ENCODE measurements at regions of chr6 and their contacts with region 1.

Region 1: GRCh38 chr6:44655412-44656342 is 268.2 kb downstream of the CDC5L start:
- DNase-seq: peak; percentile 66 to 87
- H3K4me3 ChIP-seq: no peak overlapping the region
- H3K27ac ChIP-seq: no peak overlapping the region
- H3K4me1 ChIP-seq: peaks cover 0 to 5% of the 10 kb centered on the region in 2 donors
- H3K27me3 ChIP-seq: no peaks in the 10 kb centered on the region
- CTCF ChIP-seq: peak; percentile 65 to 87 (median 87)

Region 2: GRCh38 chr6:44512868-44513741 is 142.6 kb before region 1 on chr6:
- intact Hi-C with region 1: no loop called
- DNase-seq: no peak
- H3K4me3 ChIP-seq: no peak overlapping the region
- H3K27ac ChIP-seq: no peak overlapping the region
- H3K4me1 ChIP-seq: no peaks in the 10 kb centered on the region
- H3K27me3 ChIP-seq: no peaks in the 10 kb centered on the region
- CTCF ChIP-seq: no peak

Region 3: GRCh38 chr6:44898296-44898930 is 242.7 kb after region 1 on chr6:
- intact Hi-C with region 1: no loop called
- DNase-seq: no peak
- H3K4me3 ChIP-seq: no peak overlapping the region
- H3K27ac ChIP-seq: no peak overlapping the region
- H3K4me1 ChIP-seq: no peaks in the 10 kb centered on the region
- H3K27me3 ChIP-seq: no peaks in the 10 kb centered on the region
- CTCF ChIP-seq: no peak

Region 4: GRCh38 chr6:45148711-45149341 is 493.1 kb after region 1 on chr6:
- intact Hi-C with region 1: no loop called
- DNase-seq: no peak
- H3K4me3 ChIP-seq: no peak overlapping the region
- H3K27ac ChIP-seq: no peak overlapping the region
- H3K4me1 ChIP-seq: no peaks in the 10 kb centered on the region
- H3K27me3 ChIP-seq: no peaks in the 10 kb centered on the region
- CTCF ChIP-seq: no peak

Region 5: DNA sequence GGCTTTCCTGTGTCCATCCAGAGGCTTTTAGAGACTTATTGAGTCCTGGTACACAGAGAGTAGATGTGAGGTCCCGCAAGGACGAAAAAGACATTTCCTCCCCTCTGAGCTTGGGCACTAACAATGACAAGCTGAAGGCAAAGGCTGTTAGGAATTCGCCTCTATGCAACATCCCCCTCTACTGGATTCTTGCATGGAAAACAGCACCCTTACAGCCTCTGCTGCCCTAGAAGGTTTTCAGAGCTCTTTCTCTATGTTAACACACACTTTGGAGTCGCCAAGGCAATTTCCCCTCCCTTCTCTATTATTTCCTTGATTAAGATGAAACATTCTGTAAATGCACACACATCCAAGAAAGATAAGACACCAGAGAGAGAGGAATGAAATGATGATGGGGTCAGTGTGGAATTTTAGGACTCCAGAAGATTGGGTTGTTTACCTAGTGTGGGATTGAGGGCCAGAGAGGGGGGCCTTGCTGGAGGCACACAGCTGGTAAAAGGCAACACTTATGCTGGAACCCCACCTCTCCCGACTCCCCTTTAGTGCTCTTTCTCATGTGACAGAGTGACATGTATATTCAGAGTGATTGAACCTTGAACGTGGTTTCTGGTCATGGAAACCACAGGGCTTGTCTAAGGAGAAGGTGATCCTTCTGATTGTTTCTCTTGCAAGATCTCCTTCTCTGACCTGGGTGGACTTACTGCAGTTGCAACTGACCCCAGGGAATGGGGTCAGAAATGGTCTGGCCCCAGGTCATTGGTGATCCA is 1059.2 kb after region 1 on chr6:
- intact Hi-C with region 1: loop called (anchors 2 kb)
- DNase-seq: peak in 1 of 2 donors; percentile 66
- H3K4me3 ChIP-seq: peak overlapping the region in 1 of 2 donors; percentile 17
- H3K27ac ChIP-seq: no peak overlapping the region
- H3K4me1 ChIP-seq: peaks cover 0 to 3% of the 10 kb centered on the region in 2 donors
- H3K27me3 ChIP-seq: no peaks in the 10 kb centered on the region
- CTCF ChIP-seq: peak; percentile 51 to 69 (median 52)

Region 6: GRCh38 chr6:45922728-45923351 is 1267.2 kb after region 1 on chr6:
- intact Hi-C with region 1: loop called (anchors 5 kb)
- DNase-seq: peak in 1 of 2 donors; percentile 72
- H3K4me3 ChIP-seq: no peak overlapping the region
- H3K27ac ChIP-seq: no peak overlapping the region
- H3K4me1 ChIP-seq: no peaks in the 10 kb centered on the region
- H3K27me3 ChIP-seq: no peaks in the 10 kb centered on the region
- CTCF ChIP-seq: peak; percentile 16 to 47 (median 17)